Naive thymus-derived CD4-positive, alpha-beta T cell (primary cell): ENCODE measurements at regions of chr2 and their contacts with region 1.

Region 1: DNA sequence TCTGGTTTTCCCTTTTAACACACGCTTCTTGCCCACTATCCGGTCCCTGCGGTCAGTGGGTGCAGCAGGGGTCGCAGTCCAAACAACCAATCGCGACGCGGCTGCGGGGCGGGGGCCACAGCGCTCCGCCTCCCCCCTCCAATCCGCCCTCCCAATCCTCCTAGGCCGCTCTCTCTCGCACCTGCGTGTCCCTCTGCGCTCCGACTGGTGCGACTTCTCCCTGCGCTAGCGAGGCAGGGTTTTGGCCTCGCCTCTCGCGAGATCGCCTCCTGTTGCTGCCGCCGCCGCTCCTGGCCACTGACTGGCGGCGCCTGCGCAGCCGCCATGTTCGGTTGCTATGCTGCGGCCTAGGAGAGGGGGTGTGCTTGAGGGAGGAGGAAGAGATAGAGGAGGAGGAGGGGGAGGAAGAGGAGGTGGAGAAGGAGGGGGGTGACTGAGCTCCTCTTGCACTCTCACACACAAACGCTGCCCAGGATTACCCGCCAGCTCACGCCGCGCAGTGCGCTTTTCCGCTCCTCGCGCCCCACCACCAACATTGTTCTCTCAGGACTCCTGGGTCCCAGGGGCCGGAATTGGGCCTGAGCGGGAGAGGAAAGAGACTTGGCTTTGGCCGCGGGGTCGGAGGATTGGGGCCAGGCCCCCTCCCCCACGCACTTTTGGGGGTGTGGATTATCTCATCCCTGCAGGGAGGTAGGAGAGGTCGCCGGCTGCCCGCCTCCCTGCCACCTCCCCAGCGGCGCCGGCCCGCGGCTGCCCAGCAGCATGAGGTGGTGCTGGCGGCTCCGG is at the start of gene PTPN4:
- DNase-seq: peak; percentile 88 to 98 (median 96)
- ATAC-seq: peak; percentile 97
- H3K4me3 ChIP-seq: peak within 1 kb of the TSS; percentile 89
- H3K4me3 Mint-ChIP-seq: peak within 1 kb of the TSS; percentile 87 to 97 (median 94)
- H3K27ac ChIP-seq: peak within 1 kb of the TSS; percentile 83
- H3K27ac Mint-ChIP-seq: peak within 1 kb of the TSS; percentile 60 to 95 (median 91)
- H3K4me1 ChIP-seq: peaks cover 25% of the 10 kb centered on the region in 2 donors
- H3K4me1 Mint-ChIP-seq: peaks cover 22 to 51% (median 39%) of the 10 kb centered on the region in 7 donors
- H3K27me3 ChIP-seq: no peaks in the 10 kb centered on the region
- H3K27me3 Mint-ChIP-seq: peaks cover 0 to 2% (median 0%) of the 10 kb centered on the region in 5 donors
- total RNA-seq, gene PTPN4: 59.9 to 122 (median 104) TPM

Region 2: DNA sequence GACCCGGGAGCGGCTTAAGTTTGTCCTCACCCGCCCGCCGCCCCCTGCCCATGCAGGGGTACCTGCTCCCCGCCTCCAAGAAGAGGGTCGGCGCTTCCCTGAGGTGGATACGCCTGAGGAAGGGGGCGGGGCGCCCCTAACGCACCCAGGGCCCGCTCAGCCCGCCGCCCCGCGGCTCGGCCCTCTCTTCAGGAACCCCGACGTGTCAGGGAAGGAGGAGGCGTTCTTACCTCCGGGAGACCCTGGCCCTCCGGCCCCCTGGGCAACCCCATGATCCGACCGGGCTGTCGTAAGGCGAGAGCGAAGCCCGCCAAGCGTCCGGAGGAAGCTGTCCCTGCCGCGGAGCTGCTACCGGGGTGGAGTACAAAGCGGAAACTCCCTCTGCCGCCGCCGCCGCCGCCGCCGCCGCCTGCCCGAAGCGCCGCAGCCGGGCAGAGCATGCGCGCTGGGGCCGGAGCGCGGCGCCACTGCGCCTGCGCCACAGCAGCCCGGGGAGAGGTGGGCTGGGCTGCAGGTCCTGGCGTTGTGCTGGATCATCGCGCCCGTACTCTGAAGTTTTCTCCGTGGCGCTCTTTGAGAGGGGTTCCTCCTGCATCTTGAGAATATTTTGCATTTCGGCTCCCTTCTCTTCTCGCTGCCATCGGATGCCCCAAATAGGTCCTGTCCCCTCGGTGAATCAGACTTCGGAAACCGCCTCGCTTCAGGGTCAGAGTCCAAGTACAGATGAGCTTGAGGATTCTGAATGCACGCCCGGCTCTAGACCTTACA is 1745.7 kb before region 1 on chr2 and contains the start of gene CCDC93:
- CTCF ChIA-PET with region 1: no interaction called
- POLR2A ChIA-PET with region 1: no interaction called
- intact Hi-C with region 1: loop called in 1 of 2 experiments (anchors 1 kb)
- DNase-seq: peak; percentile 82 to 95 (median 91)
- ATAC-seq: peak; percentile 88
- H3K4me3 ChIP-seq: peak within 1 kb of the TSS; percentile 90
- H3K4me3 Mint-ChIP-seq: peak within 1 kb of the TSS; percentile 87 to 98 (median 95)
- H3K27ac ChIP-seq: peak within 1 kb of the TSS; percentile 98
- H3K27ac Mint-ChIP-seq: peak within 1 kb of the TSS; percentile 59 to 96 (median 90)
- H3K4me1 ChIP-seq: peaks cover 6 to 9% of the 10 kb centered on the region in 2 donors
- H3K4me1 Mint-ChIP-seq: peaks cover 30 to 69% (median 41%) of the 10 kb centered on the region in 7 donors
- H3K27me3 ChIP-seq: no peaks in the 10 kb centered on the region
- H3K27me3 Mint-ChIP-seq: peaks cover 0 to 6% (median 1%) of the 10 kb centered on the region in 5 donors
- total RNA-seq, gene CCDC93: 34.8 to 73.9 (median 51.5) TPM

Region 3: DNA sequence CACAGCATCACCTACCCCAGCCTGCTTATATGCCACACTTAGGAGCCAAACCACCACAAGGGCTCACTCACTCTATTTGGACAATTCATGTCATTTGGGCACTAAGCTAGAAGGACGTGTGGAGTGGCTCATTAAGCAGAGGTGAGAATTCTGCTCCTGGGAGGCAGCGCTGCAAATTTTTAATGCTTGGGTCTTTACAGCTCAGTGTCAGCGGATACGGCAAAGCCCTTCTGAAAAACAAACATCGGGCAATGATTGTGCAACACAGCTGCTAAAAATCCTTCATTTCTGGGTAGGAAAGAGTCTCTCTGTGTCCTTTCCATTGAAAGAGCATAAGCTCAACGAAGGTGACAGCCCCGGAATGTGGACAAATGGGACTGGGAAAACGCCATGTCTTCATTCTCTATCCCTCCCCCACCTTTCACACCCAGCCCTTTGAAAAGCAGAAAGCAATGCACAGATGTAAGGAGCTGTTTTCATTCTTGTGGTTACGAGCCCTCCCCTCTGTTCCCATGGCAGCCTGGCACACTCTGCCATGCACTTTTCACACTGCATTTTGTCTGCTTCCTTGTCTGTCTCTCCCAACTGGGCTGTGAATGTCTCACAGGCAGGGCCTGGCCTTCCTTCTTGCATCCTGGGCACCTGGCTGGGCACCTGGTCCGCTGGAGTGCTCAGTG is 64.7 kb before region 1 on chr2:
- CTCF ChIA-PET with region 1: no interaction called
- POLR2A ChIA-PET with region 1: interaction called, 3 read pairs
- intact Hi-C with region 1: loop called in 1 of 2 experiments (anchors 1 kb)
- DNase-seq: peak in 7 of 9 donors; percentile 62 to 79 (median 72)
- ATAC-seq: peak; percentile 74
- H3K4me3 ChIP-seq: peak overlapping the region; percentile 53
- H3K4me3 Mint-ChIP-seq: peak overlapping the region in 9 of 10 donors; percentile 74 to 91 (median 89)
- H3K27ac ChIP-seq: peak overlapping the region; percentile 56
- H3K27ac Mint-ChIP-seq: peak overlapping the region in 8 of 9 donors; percentile 83 to 97 (median 92)
- H3K4me1 ChIP-seq: peaks cover 0 to 50% of the 10 kb centered on the region in 2 donors
- H3K4me1 Mint-ChIP-seq: peaks cover 17 to 60% (median 55%) of the 10 kb centered on the region in 7 donors
- H3K27me3 ChIP-seq: no peaks in the 10 kb centered on the region
- H3K27me3 Mint-ChIP-seq: no peaks in the 10 kb centered on the region

Region 4: GRCh38 chr2:119826370-119826961 is 66.8 kb after region 1 on chr2:
- CTCF ChIA-PET with region 1: interaction called, 88 read pairs
- POLR2A ChIA-PET with region 1: interaction called, 6 read pairs
- intact Hi-C with region 1: loop called (anchors 1 kb)
- DNase-seq: peak in 7 of 9 donors; percentile 10 to 53 (median 28)
- ATAC-seq: peak; percentile 82
- H3K4me3 ChIP-seq: no peak overlapping the region
- H3K4me3 Mint-ChIP-seq: no peak overlapping the region
- H3K27ac ChIP-seq: no peak overlapping the region
- H3K27ac Mint-ChIP-seq: peak overlapping the region in 4 of 9 donors; percentile 32 to 67 (median 45)
- H3K4me1 ChIP-seq: peaks cover 0 to 8% of the 10 kb centered on the region in 2 donors
- H3K4me1 Mint-ChIP-seq: peaks cover 22 to 76% (median 59%) of the 10 kb centered on the region in 7 donors
- H3K27me3 ChIP-seq: no peaks in the 10 kb centered on the region
- H3K27me3 Mint-ChIP-seq: no peaks in the 10 kb centered on the region

Region 5: GRCh38 chr2:120109186-120110061 is 349.8 kb after region 1 on chr2:
- CTCF ChIA-PET with region 1: no interaction called
- POLR2A ChIA-PET with region 1: no interaction called
- intact Hi-C with region 1: loop called (anchors 1 to 5 kb)
- DNase-seq: peak in 7 of 9 donors; percentile 14 to 73 (median 67)
- ATAC-seq: peak; percentile 80
- H3K4me3 ChIP-seq: peak overlapping the region; percentile 34
- H3K4me3 Mint-ChIP-seq: peak overlapping the region; percentile 30 to 87 (median 70)
- H3K27ac ChIP-seq: peak overlapping the region; percentile 39
- H3K27ac Mint-ChIP-seq: peak overlapping the region; percentile 10 to 90 (median 72)
- H3K4me1 ChIP-seq: peaks cover 17 to 21% of the 10 kb centered on the region in 2 donors
- H3K4me1 Mint-ChIP-seq: peaks cover 19 to 44% (median 36%) of the 10 kb centered on the region in 7 donors
- H3K27me3 ChIP-seq: no peaks in the 10 kb centered on the region
- H3K27me3 Mint-ChIP-seq: peaks cover 0 to 33% (median 0%) of the 10 kb centered on the region in 5 donors

Region 6: GRCh38 chr2:120312861-120313694 is 553.4 kb after region 1 on chr2:
- CTCF ChIA-PET with region 1: no interaction called
- POLR2A ChIA-PET with region 1: no interaction called
- intact Hi-C with region 1: loop called in 1 of 2 experiments (anchors 10 kb)
- DNase-seq: peak; percentile 46 to 77 (median 67)
- ATAC-seq: peak; percentile 78
- H3K4me3 ChIP-seq: peak overlapping the region; percentile 49
- H3K4me3 Mint-ChIP-seq: peak overlapping the region; percentile 76 to 92 (median 86)
- H3K27ac ChIP-seq: peak overlapping the region; percentile 8
- H3K27ac Mint-ChIP-seq: peak overlapping the region; percentile 32 to 91 (median 67)
- H3K4me1 ChIP-seq: peaks cover 3 to 19% of the 10 kb centered on the region in 2 donors
- H3K4me1 Mint-ChIP-seq: peaks cover 7 to 45% (median 34%) of the 10 kb centered on the region in 7 donors
- H3K27me3 ChIP-seq: no peaks in the 10 kb centered on the region
- H3K27me3 Mint-ChIP-seq: peaks cover 0 to 4% (median 0%) of the 10 kb centered on the region in 5 donors